Heart left ventricle (tissue), 16 donors: ENCODE measurements at regions of chr9 and their contacts with region 1.

Region 1: DNA sequence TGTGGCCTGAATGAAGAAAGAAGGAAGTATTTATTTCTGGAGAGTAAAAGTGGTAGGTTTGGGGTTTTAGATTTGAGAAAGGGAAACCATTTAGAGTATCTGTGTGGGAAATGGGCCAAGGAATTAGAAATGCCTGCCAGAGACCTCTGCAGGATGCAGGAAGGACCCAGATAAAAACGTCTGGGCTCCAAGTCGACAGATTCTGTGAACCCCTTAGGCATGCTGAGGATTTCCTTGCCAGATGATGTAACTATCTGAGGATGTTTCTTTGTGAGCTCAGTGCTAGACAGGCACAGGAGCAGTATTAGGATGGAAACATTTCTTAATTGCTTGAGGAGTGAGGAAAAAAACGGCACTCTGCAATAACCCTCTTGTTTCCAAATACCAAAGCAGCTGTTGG is 251.8 kb upstream of the DMRT1 start:
- DNase-seq: no peak
- ATAC-seq: peak in 3 of 4 donors; percentile 34 to 59 (median 52)
- H3K4me3 ChIP-seq: no peak overlapping the region
- H3K27ac ChIP-seq: peak overlapping the region in 11 of 12 donors; percentile 17 to 87 (median 75)
- H3K4me1 ChIP-seq: peaks cover 0 to 71% (median 27%) of the 10 kb centered on the region in 12 donors
- H3K27me3 ChIP-seq: no peaks in the 10 kb centered on the region
- CTCF ChIP-seq: no peak
- POLR2A ChIP-seq: no peak

Region 2: GRCh38 chr9:573671-574410 is 15.9 kb before region 1 on chr9:
- intact Hi-C with region 1: loop called in 1 of 10 experiments (anchors 2 kb)
- DNase-seq: peak in 1 of 5 donors; percentile 33
- ATAC-seq: peak in 3 of 4 donors; percentile 24 to 42 (median 26)
- H3K4me3 ChIP-seq: no peak overlapping the region
- H3K27ac ChIP-seq: peak overlapping the region; percentile 52 to 94 (median 79)
- H3K4me1 ChIP-seq: peaks cover 0 to 70% (median 25%) of the 10 kb centered on the region in 12 donors
- H3K27me3 ChIP-seq: no peaks in the 10 kb centered on the region
- CTCF ChIP-seq: no peak
- POLR2A ChIP-seq: no peak